Caco-2 (cell line): ENCODE measurements at regions of chr7 and their contacts with region 1.

Region 1: GRCh38 chr7:106176414-106177299 is 64.5 kb upstream of the SYPL1 start:
- DNase-seq: peak; percentile 81 to 89
- H3K4me3 ChIP-seq: no peak overlapping the region
- H3K4me3 Mint-ChIP-seq: no peak overlapping the region
- H3K27ac Mint-ChIP-seq: no peak overlapping the region
- H3K4me1 ChIP-seq: no peaks in the 10 kb centered on the region
- H3K4me1 Mint-ChIP-seq: no peaks in the 10 kb centered on the region
- H3K27me3 ChIP-seq: no peaks in the 10 kb centered on the region
- H3K27me3 Mint-ChIP-seq: peaks cover 3% of the 10 kb centered on the region
- CTCF ChIP-seq: peak; percentile 96

Region 2: DNA sequence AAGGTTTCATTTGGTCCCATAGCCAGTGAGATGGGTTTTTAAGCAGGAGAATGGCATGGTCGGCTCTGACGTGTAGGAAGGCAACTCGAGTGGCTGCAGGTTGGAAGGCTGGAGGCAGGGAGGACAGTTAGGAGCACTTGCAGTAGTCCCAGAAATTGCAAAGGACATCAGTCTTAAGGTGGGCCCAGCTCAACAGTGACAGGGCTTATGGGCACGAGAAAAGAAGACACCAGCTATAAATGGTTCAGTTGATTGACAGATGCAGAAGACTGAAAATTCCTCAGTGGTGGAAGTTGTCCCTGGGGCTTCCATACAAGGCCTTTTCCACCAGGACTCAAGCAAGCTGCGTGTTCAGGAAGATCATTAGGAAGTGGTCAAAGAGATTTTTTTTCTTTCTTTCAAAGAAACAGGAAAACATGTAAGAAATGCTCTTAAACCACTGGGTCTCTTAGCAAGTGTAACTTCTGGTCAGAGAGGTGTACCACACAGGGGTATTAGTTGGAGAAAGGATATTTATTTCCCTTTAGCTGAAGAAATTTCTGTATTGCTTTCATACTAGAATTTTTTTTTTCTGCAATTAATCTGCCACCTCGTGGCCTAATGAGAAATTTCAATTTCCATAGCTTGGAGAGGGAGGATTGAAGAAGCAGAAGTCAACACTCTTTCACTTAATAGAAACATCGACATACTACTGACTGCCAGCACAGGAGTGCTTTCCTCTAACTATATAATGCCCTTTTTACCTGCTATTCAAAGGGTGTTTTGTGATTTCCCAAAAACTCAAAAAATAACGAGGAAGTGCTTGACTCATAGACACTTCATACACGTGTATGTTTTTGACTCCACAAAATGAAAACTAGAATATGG is 285.6 kb after region 1 on chr7:
- CTCF ChIA-PET with region 1: interaction called, 81 read pairs
- POLR2A ChIA-PET with region 1: interaction called, 4 read pairs
- intact Hi-C with region 1: loop called (anchors 1 kb)
- DNase-seq: peak in 1 of 2 experiments; percentile 41
- H3K4me3 ChIP-seq: no peak overlapping the region
- H3K4me3 Mint-ChIP-seq: peak overlapping the region; percentile 25
- H3K27ac Mint-ChIP-seq: peak overlapping the region; percentile 89
- H3K4me1 ChIP-seq: peaks cover 39% of the 10 kb centered on the region
- H3K4me1 Mint-ChIP-seq: peaks cover 38% of the 10 kb centered on the region
- H3K27me3 ChIP-seq: no peaks in the 10 kb centered on the region
- H3K27me3 Mint-ChIP-seq: no peaks in the 10 kb centered on the region
- CTCF ChIP-seq: peak; percentile 39 to 54

Region 3: DNA sequence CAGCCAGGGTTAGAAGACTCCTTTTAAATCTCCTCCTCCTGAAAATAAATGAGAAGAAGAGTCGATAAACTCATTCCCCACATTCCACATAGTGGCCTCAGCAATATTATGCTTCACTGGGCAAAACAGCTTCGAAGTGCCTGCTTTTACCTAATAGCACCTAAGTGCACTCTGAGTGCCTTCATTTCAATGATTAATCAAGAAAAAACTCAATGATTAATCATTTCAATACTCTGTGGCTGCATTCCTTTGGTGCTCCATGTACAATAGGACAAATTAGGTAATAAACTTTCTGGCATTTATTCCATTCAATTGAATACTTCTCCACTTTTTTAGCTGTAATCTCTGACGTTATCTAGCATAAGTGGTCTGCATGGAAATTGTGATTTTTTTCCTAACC is 309.7 kb after region 1 on chr7:
- CTCF ChIA-PET with region 1: no interaction called
- POLR2A ChIA-PET with region 1: no interaction called
- intact Hi-C with region 1: no loop called
- DNase-seq: no peak
- H3K4me3 ChIP-seq: no peak overlapping the region
- H3K4me3 Mint-ChIP-seq: no peak overlapping the region
- H3K27ac Mint-ChIP-seq: no peak overlapping the region
- H3K4me1 ChIP-seq: no peaks in the 10 kb centered on the region
- H3K4me1 Mint-ChIP-seq: no peaks in the 10 kb centered on the region
- H3K27me3 ChIP-seq: no peaks in the 10 kb centered on the region
- H3K27me3 Mint-ChIP-seq: no peaks in the 10 kb centered on the region
- CTCF ChIP-seq: no peak

Region 4: GRCh38 chr7:106520962-106521940 is 344.6 kb after region 1 on chr7:
- CTCF ChIA-PET with region 1: no interaction called
- POLR2A ChIA-PET with region 1: no interaction called
- intact Hi-C with region 1: loop called (anchors 5 kb)
- DNase-seq: peak in 1 of 2 experiments; percentile 11
- H3K4me3 ChIP-seq: no peak overlapping the region
- H3K4me3 Mint-ChIP-seq: no peak overlapping the region
- H3K27ac Mint-ChIP-seq: no peak overlapping the region
- H3K4me1 ChIP-seq: no peaks in the 10 kb centered on the region
- H3K4me1 Mint-ChIP-seq: no peaks in the 10 kb centered on the region
- H3K27me3 ChIP-seq: no peaks in the 10 kb centered on the region
- H3K27me3 Mint-ChIP-seq: peaks cover 27% of the 10 kb centered on the region
- CTCF ChIP-seq: peak in 1 of 2 experiments; percentile 13

Region 5: DNA sequence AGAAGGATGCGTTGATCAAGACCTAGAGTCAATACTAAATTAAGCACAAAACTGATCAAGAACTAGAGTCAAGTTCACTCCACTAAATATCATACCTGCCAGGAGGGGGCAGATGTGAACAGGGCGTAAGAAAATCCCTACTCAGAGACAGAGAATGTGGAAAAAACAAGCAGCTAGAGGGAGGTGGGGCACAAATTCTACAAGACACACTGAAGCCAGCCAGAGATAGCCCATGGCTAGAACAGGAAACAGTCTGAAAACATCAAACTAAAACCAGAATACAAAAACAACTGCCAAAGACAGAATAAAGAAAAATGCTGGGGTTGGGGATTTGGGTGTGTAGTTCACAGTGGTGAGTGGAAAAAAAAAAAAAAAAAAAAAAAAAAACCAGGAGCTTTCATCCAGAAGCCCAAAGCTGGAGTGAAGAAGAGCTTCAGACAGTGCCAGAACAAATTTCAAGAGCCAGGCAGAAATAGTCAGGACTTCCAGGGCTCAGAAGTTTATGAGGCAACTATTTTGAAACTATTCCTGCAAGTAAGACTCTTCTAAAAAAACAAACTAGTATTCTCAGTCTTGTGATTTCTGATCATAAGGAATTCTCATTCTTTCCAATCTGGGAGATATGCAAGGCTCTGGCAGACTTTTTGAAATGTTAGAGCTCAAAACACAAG is 366.0 kb after region 1 on chr7:
- CTCF ChIA-PET with region 1: interaction called, 13 read pairs
- POLR2A ChIA-PET with region 1: no interaction called
- intact Hi-C with region 1: loop called (anchors 1 kb)
- DNase-seq: peak; percentile 57 to 68
- H3K4me3 ChIP-seq: no peak overlapping the region
- H3K4me3 Mint-ChIP-seq: no peak overlapping the region
- H3K27ac Mint-ChIP-seq: no peak overlapping the region
- H3K4me1 ChIP-seq: no peaks in the 10 kb centered on the region
- H3K4me1 Mint-ChIP-seq: peaks cover 7% of the 10 kb centered on the region
- H3K27me3 ChIP-seq: no peaks in the 10 kb centered on the region; the same call in 1 of the 2 replicates
- H3K27me3 Mint-ChIP-seq: peaks cover 4% of the 10 kb centered on the region
- CTCF ChIP-seq: peak; percentile 68 to 76

Region 6: DNA sequence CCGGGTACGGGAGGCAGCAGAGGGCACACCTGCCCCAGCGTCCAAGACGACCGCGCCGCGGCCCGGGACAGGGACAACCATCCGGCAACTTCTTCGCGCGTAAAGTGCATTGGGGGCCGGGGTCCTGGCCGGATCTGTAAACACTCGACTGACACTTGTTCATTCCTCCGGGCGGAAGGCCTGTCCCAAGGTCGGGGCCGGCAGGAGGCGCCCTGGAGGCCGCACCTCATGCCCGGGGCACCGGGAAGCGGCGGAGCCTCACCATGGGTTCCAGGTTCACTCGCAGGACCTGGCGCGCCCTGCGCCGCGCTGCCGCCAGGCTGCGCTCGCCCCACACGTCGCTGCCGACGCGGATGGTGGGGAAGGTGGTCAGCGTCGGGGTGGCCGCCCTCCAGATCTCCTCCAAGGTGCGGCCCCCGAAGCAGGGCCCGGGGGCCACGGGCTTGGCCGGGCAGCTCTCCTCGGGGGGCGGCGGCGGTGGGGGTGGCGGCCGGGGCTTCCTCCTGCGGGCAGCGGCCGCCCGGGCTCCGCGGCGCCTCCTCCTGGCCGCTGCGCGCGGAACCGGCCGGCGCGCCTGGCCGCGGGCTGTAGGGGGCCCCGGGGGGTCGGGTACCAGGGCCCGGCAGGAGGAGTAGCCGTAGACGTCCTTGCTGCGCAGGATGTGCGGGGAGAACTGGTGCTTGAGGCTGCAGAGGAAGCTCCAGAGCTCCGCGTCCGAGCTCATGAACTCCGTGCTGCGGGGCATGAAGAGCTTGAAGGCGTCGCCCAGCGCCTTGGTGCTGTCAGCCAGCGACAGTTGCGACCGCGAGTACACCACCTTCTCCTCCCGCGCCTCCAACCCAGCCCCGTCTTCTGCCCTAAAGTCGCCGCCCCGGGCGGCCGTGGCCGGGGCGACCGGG is 483.6 kb after region 1 on chr7:
- CTCF ChIA-PET with region 1: interaction called, 4 read pairs
- POLR2A ChIA-PET with region 1: no interaction called
- intact Hi-C with region 1: loop called (anchors 1 kb)
- DNase-seq: peak; percentile 68 to 83
- H3K4me3 ChIP-seq: peak overlapping the region; percentile 90
- H3K4me3 Mint-ChIP-seq: peak overlapping the region; percentile 73
- H3K27ac Mint-ChIP-seq: peak overlapping the region; percentile 16
- H3K4me1 ChIP-seq: peaks cover 14% of the 10 kb centered on the region
- H3K4me1 Mint-ChIP-seq: no peaks in the 10 kb centered on the region
- H3K27me3 ChIP-seq: no peaks in the 10 kb centered on the region
- H3K27me3 Mint-ChIP-seq: peaks cover 3% of the 10 kb centered on the region
- CTCF ChIP-seq: peak; percentile 55 to 60

Region 7: GRCh38 chr7:106736508-106737201 is 560.0 kb after region 1 on chr7:
- CTCF ChIA-PET with region 1: interaction called, 24 read pairs
- POLR2A ChIA-PET with region 1: no interaction called
- intact Hi-C with region 1: loop called (anchors 1 kb)
- DNase-seq: peak; percentile 52 to 59
- H3K4me3 ChIP-seq: no peak overlapping the region
- H3K4me3 Mint-ChIP-seq: no peak overlapping the region
- H3K27ac Mint-ChIP-seq: no peak overlapping the region
- H3K4me1 ChIP-seq: 0 out of 2 replicates have a peak, but pooled peaks cover 5% of the 10 kb centered on the region
- H3K4me1 Mint-ChIP-seq: no peaks in the 10 kb centered on the region
- H3K27me3 ChIP-seq: no peaks in the 10 kb centered on the region
- H3K27me3 Mint-ChIP-seq: no peaks in the 10 kb centered on the region
- CTCF ChIP-seq: peak; percentile 63 to 71

Region 8: DNA sequence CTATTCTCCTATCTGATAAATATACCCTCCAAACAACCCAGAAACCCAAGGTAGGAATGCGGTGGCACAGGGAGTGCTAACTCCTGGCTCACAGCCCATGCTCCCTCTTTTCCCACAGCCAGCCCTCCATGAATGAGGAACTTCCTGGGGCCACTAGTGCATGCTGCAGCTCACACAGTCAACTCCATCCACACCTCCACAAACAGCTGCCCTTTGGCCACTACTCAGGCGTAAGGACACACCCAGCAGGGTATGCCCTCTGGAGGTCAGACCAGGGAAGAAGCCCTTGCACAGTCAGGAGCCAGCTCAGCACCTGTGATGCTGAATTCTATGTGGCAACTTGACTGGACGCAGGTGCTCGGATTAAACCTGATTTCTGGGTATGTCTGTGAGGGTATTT is 603.2 kb after region 1 on chr7:
- CTCF ChIA-PET with region 1: interaction called, 8 read pairs
- POLR2A ChIA-PET with region 1: no interaction called
- intact Hi-C with region 1: loop called (anchors 2 kb)
- DNase-seq: peak; percentile 71 to 82
- H3K4me3 ChIP-seq: no peak overlapping the region
- H3K4me3 Mint-ChIP-seq: no peak overlapping the region
- H3K27ac Mint-ChIP-seq: no peak overlapping the region
- H3K4me1 ChIP-seq: peaks cover 4% of the 10 kb centered on the region; the same call in 1 of the 2 replicates
- H3K4me1 Mint-ChIP-seq: peaks cover 14% of the 10 kb centered on the region
- H3K27me3 ChIP-seq: no peaks in the 10 kb centered on the region
- H3K27me3 Mint-ChIP-seq: no peaks in the 10 kb centered on the region
- CTCF ChIP-seq: peak; percentile 40 to 77